Caco-2 (cell line): ENCODE measurements at regions of chr9 and their contacts with region 1.

Region 1: GRCh38 chr9:125296833-125297372 is 35.3 kb downstream of the GAPVD1 start:
- DNase-seq: peak; percentile 80 to 83
- H3K4me3 ChIP-seq: no peak overlapping the region
- H3K4me3 Mint-ChIP-seq: peak overlapping the region; percentile 39
- H3K27ac Mint-ChIP-seq: peak overlapping the region; percentile 63
- H3K4me1 ChIP-seq: peaks cover 29% of the 10 kb centered on the region
- H3K4me1 Mint-ChIP-seq: peaks cover 12% of the 10 kb centered on the region
- H3K27me3 ChIP-seq: no peaks in the 10 kb centered on the region
- H3K27me3 Mint-ChIP-seq: no peaks in the 10 kb centered on the region
- CTCF ChIP-seq: no peak

Region 2: DNA sequence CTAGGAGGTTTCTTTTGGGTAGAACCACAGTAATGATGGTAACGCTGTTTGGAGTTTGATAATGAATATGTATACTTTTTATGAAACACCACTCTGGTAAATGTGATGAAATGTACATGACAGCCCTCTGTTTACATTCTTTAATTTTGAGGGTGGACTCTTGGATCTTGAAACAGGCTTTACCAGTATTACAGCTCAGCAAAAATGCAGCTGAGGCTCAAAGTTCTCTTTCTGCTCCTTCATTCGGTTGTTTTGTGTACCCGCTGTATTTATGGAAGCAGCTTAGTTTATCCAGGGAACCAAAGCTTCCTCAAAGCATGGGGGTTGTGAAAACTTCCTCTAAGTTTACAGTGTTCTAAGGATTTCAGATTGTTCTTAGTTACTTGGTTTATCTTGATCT is 24.2 kb before region 1 on chr9:
- CTCF ChIA-PET with region 1: interaction called, 4 read pairs
- POLR2A ChIA-PET with region 1: interaction called, 4 read pairs
- intact Hi-C with region 1: loop called (anchors 1 kb)
- DNase-seq: peak; percentile 79 to 86
- H3K4me3 ChIP-seq: no peak overlapping the region; the same call in 1 of the 2 replicates
- H3K4me3 Mint-ChIP-seq: peak overlapping the region; percentile 55
- H3K27ac Mint-ChIP-seq: peak overlapping the region; percentile 68
- H3K4me1 ChIP-seq: peaks cover 61% of the 10 kb centered on the region
- H3K4me1 Mint-ChIP-seq: peaks cover 25% of the 10 kb centered on the region
- H3K27me3 ChIP-seq: no peaks in the 10 kb centered on the region
- H3K27me3 Mint-ChIP-seq: no peaks in the 10 kb centered on the region
- CTCF ChIP-seq: no peak